Sciatic nerve (tissue), 2 donors: ENCODE measurements at regions of chr10 and their contacts with region 1.

Region 1: GRCh38 chr10:103888113-103888841 is 29.7 kb downstream of the STN1 start:
- DNase-seq: peak; percentile 72
- ATAC-seq: peak; percentile 69

Region 2: GRCh38 chr10:103833731-103834365 is 54.4 kb before region 1 on chr10:
- intact Hi-C with region 1: no loop called
- DNase-seq: peak; percentile 81
- ATAC-seq: peak; percentile 85

Region 3: GRCh38 chr10:104026762-104027161 is 138.5 kb after region 1 on chr10:
- intact Hi-C with region 1: no loop called
- DNase-seq: no peak
- ATAC-seq: no peak

Region 4: GRCh38 chr10:104121520-104122224 is 233.4 kb after region 1 on chr10 and contains the start of gene SFR1:
- intact Hi-C with region 1: loop called (anchors 10 kb)
- DNase-seq: peak; percentile 99
- ATAC-seq: peak; percentile 97
- total RNA-seq, gene SFR1: 7.8 TPM